CD4-positive, alpha-beta memory T cell (primary cell): ENCODE measurements at regions of chr6 and their contacts with region 1.

Region 1: GRCh38 chr6:31546962-31547726 is at the start of gene NFKBIL1:
- DNase-seq: peak; percentile 83 to 91 (median 85)
- H3K4me3 ChIP-seq: peak within 1 kb of the TSS; percentile 55 to 79
- H3K4me3 Mint-ChIP-seq: peak within 1 kb of the TSS; percentile 85 to 93 (median 88)
- H3K27ac ChIP-seq: peak within 1 kb of the TSS; percentile 85
- H3K27ac Mint-ChIP-seq: peak within 1 kb of the TSS; percentile 93 to 99 (median 97)
- H3K4me1 ChIP-seq: peaks cover 45% of the 10 kb centered on the region
- H3K4me1 Mint-ChIP-seq: peaks cover 24 to 49% (median 36%) of the 10 kb centered on the region in 4 donors
- H3K27me3 ChIP-seq: no peaks in the 10 kb centered on the region
- H3K27me3 Mint-ChIP-seq: no peaks in the 10 kb centered on the region
- total RNA-seq, gene NFKBIL1: 9.8 to 13.3 TPM

Region 2: DNA sequence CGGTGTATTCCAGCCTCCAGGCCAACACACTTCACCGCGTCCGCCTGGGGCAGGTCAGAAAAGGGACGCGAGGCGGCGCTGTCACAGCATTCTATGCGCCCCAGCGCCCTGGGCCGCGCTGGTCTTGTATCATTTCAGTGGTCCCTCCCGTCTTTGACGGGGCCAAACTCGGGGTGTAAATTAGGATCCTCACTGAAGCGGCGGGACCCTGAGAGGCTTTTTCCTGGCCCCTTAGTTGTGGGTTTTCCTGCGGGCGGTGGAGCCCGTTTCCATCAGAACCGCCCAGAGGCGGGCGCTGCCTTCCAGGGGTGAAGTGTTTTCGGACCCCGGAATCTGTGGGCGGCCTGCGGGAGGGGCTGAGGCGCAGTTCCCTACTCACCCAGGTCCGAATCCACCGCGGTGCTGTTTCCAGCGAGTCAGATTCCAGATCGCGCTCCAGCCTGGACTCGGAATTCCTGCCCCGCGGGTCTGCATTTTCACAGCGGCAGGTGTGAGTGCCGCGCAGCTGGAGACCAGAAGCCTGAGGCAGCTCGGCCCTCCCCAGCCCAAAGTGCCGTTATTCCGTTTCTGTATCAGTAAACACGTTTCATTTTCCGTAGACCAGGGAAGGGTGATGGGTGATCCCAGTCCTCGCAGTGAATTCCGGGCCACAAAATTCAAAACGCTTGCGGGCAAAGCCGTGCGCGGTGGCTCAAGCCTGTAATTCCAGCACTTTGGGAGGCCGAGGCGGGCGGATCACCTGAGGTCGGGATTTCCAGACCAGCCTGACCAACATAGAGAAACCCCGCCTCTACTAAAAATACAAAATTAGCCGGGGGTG is 53.1 kb before region 1 on chr6:
- CTCF ChIA-PET with region 1: interaction called, 49 read pairs
- POLR2A ChIA-PET with region 1: interaction called, 152 read pairs
- intact Hi-C with region 1: loop called (anchors 1 kb)
- DNase-seq: peak; percentile 56 to 76 (median 73)
- H3K4me3 ChIP-seq: peak overlapping the region; percentile 71 to 91
- H3K4me3 Mint-ChIP-seq: peak overlapping the region; percentile 85 to 98 (median 91)
- H3K27ac ChIP-seq: peak overlapping the region; percentile 77
- H3K27ac Mint-ChIP-seq: peak overlapping the region; percentile 87 to 96 (median 95)
- H3K4me1 ChIP-seq: peaks cover 63% of the 10 kb centered on the region
- H3K4me1 Mint-ChIP-seq: peaks cover 35 to 69% (median 50%) of the 10 kb centered on the region in 4 donors
- H3K27me3 ChIP-seq: no peaks in the 10 kb centered on the region
- H3K27me3 Mint-ChIP-seq: no peaks in the 10 kb centered on the region

Region 3: DNA sequence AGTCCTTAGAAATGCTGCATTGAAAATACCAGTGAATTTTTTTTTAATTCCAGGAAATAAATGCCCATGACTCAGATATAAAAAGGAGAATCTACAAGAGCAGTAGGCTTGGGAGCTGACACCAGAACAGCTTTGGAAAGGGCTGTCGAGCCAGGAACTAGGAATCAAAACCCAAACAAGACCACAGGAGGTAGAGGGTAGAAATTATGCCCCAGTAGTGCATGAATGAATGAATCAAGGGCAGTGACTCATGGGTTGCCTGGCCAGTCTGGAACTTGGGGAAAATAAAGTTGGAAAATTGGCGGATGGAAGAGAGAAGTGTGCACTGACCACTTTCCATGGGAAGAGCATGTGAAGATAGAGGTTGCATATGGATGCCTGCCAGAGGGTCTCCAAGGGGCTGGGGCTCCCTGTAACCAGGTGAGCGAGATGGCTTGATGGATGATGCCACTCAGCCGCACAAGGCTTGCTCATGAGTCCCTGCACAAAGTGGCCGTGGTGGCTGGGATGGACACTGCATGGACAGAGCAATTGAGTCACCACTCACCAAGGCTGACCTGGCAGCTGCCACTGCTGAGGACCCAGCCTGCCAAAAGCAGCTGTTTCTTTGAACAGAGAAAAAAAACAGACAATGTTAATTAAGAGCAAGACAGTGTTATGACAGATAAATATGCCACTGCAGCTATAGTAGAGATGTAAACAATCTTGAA is 33.5 kb before region 1 on chr6:
- CTCF ChIA-PET with region 1: no interaction called
- POLR2A ChIA-PET with region 1: no interaction called
- intact Hi-C with region 1: no loop called
- DNase-seq: no peak
- H3K4me3 ChIP-seq: no peak overlapping the region
- H3K4me3 Mint-ChIP-seq: no peak overlapping the region
- H3K27ac ChIP-seq: no peak overlapping the region
- H3K27ac Mint-ChIP-seq: peak overlapping the region in 2 of 7 donors; percentile 43 to 73
- H3K4me1 ChIP-seq: no peaks in the 10 kb centered on the region
- H3K4me1 Mint-ChIP-seq: no peaks in the 10 kb centered on the region
- H3K27me3 ChIP-seq: no peaks in the 10 kb centered on the region
- H3K27me3 Mint-ChIP-seq: peaks cover 0 to 3% of the 10 kb centered on the region in 2 donors

Region 4: GRCh38 chr6:31568537-31568961 is 21.4 kb after region 1 on chr6:
- CTCF ChIA-PET with region 1: interaction called, 595 read pairs
- POLR2A ChIA-PET with region 1: interaction called, 3,597 read pairs
- intact Hi-C with region 1: loop called (anchors 1 kb)
- DNase-seq: peak; percentile 81 to 93 (median 83)
- H3K4me3 ChIP-seq: no peak overlapping the region
- H3K4me3 Mint-ChIP-seq: peak overlapping the region; percentile 7 to 83 (median 72)
- H3K27ac ChIP-seq: peak overlapping the region; percentile 79
- H3K27ac Mint-ChIP-seq: peak overlapping the region; percentile 95 to 99 (median 98)
- H3K4me1 ChIP-seq: peaks cover 90% of the 10 kb centered on the region
- H3K4me1 Mint-ChIP-seq: peaks cover 58 to 87% (median 72%) of the 10 kb centered on the region in 4 donors
- H3K27me3 ChIP-seq: no peaks in the 10 kb centered on the region
- H3K27me3 Mint-ChIP-seq: no peaks in the 10 kb centered on the region

Region 5: DNA sequence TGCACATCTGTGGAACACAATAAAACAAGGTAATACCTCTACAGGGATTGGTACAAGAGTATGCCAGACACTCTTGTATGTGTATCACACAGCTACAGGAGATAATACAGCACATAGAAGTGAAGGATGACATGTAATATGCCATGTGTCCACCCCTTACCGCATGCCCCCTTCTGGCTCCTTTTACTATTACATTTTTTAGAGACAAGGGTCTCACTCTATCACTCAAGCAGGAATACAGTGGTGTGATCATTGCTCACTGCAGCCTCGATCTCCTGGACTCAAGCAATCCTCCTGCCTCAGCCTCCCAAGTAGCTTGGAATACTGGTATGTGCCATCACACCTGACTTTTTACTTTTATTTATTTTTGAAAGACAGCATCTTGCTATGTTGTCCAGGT is 49.9 kb after region 1 on chr6:
- CTCF ChIA-PET with region 1: interaction called, 1,152 read pairs
- POLR2A ChIA-PET with region 1: interaction called, 3,597 read pairs
- intact Hi-C with region 1: loop called (anchors 1 kb)
- DNase-seq: peak; percentile 66 to 79 (median 75)
- H3K4me3 ChIP-seq: no peak overlapping the region
- H3K4me3 Mint-ChIP-seq: peak overlapping the region in 5 of 8 donors; percentile 33 to 66 (median 43)
- H3K27ac ChIP-seq: no peak overlapping the region
- H3K27ac Mint-ChIP-seq: peak overlapping the region; percentile 60 to 89 (median 77)
- H3K4me1 ChIP-seq: peaks cover 60% of the 10 kb centered on the region
- H3K4me1 Mint-ChIP-seq: peaks cover 27 to 56% (median 45%) of the 10 kb centered on the region in 4 donors
- H3K27me3 ChIP-seq: no peaks in the 10 kb centered on the region
- H3K27me3 Mint-ChIP-seq: no peaks in the 10 kb centered on the region

Region 6: GRCh38 chr6:31834434-31835198 is 287.5 kb after region 1 on chr6:
- CTCF ChIA-PET with region 1: interaction called, 24 read pairs
- POLR2A ChIA-PET with region 1: no interaction called
- intact Hi-C with region 1: loop called (anchors 1 kb)
- DNase-seq: peak; percentile 80 to 84 (median 81)
- H3K4me3 ChIP-seq: peak overlapping the region; percentile 75 to 88
- H3K4me3 Mint-ChIP-seq: peak overlapping the region; percentile 88 to 99 (median 96)
- H3K27ac ChIP-seq: peak overlapping the region; percentile 88
- H3K27ac Mint-ChIP-seq: peak overlapping the region; percentile 97 to 99 (median 99)
- H3K4me1 ChIP-seq: peaks cover 61% of the 10 kb centered on the region
- H3K4me1 Mint-ChIP-seq: peaks cover 27 to 65% (median 48%) of the 10 kb centered on the region in 4 donors
- H3K27me3 ChIP-seq: no peaks in the 10 kb centered on the region
- H3K27me3 Mint-ChIP-seq: no peaks in the 10 kb centered on the region